ENCODE measurements at regions of chr10 and their contacts with region 1.

Region 1: GRCh38 chr10:69239816-69240434 is 19.8 kb downstream of the HKDC1 start:
- DNase-seq: peak; percentile 51
- H3K4me3 ChIP-seq: no peak overlapping the region
- H3K27ac ChIP-seq: no peak overlapping the region
- H3K4me1 ChIP-seq: peaks cover 0 to 25% (median 12%) of the 10 kb centered on the region in 6 donors
- H3K27me3 ChIP-seq: no peaks in the 10 kb centered on the region
- CTCF ChIP-seq: no peak
- POLR2A ChIP-seq: no peak

Region 2: GRCh38 chr10:69160809-69161241 is 79.1 kb before region 1 on chr10:
- intact Hi-C with region 1: no loop called
- DNase-seq: no peak
- H3K4me3 ChIP-seq: no peak overlapping the region
- H3K27ac ChIP-seq: no peak overlapping the region
- H3K4me1 ChIP-seq: no peaks in the 10 kb centered on the region
- H3K27me3 ChIP-seq: no peaks in the 10 kb centered on the region
- CTCF ChIP-seq: no peak
- POLR2A ChIP-seq: no peak

Region 3: DNA sequence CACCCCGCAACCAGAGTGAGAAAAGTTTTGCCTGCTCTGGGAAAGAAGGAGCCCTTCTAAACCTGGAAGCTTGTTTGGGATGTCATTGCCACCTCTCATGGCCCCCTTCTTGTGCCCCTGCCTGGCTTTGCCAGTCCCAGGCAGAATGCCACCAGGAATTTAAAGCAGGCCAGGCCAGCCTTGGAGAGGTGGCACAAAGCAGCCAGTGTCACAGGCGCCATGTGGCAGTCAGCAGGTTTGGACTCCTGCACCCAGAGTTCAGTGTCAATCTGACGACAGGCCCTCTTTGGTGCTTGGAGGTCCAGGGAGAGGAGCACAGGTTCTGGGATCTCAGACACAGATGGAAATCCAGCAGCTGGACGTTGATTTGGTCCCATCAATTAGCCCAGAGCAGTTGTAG is 51.1 kb after region 1 on chr10:
- intact Hi-C with region 1: no loop called
- DNase-seq: no peak
- H3K4me3 ChIP-seq: no peak overlapping the region
- H3K27ac ChIP-seq: no peak overlapping the region
- H3K4me1 ChIP-seq: no peaks in the 10 kb centered on the region
- H3K27me3 ChIP-seq: no peaks in the 10 kb centered on the region
- CTCF ChIP-seq: no peak
- POLR2A ChIP-seq: no peak

Region 4: DNA sequence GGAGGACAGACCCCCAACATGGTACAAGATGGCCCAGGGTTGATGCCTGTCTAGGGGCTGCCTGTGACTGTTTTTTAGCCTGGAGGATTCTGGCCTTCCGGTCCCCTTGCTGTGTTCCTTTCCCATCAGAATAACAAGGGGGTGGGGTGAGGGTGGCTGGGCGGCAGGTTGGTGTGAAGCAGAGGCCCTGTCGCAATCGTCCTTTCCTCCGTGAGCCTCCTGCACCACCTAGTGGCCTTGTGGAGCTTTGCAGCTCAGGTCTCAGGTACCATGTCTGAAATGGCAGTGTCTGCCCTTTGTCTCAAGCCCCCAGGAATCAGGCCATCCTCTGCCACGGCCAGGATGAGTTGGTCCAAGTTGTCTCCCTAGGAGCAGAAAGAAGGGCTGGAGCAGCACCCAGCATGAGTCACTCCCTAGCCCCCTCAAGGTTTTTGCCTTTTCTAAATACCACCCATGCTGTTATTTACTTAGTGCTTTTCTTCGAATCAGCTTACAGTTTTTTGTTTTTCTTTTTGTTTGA is 152.6 kb after region 1 on chr10:
- intact Hi-C with region 1: loop called (anchors 2 kb)
- DNase-seq: peak; percentile 94
- H3K4me3 ChIP-seq: no peak overlapping the region
- H3K27ac ChIP-seq: peak overlapping the region in 4 of 8 donors; percentile 29 to 62 (median 53)
- H3K4me1 ChIP-seq: peaks cover 0 to 23% (median 8%) of the 10 kb centered on the region in 6 donors
- H3K27me3 ChIP-seq: no peaks in the 10 kb centered on the region
- CTCF ChIP-seq: peak; percentile 88 to 98 (median 95)
- POLR2A ChIP-seq: no peak